Transverse colon (tissue), 4 donors: ENCODE measurements at regions of chr11 and their contacts with region 1.

Region 1: DNA sequence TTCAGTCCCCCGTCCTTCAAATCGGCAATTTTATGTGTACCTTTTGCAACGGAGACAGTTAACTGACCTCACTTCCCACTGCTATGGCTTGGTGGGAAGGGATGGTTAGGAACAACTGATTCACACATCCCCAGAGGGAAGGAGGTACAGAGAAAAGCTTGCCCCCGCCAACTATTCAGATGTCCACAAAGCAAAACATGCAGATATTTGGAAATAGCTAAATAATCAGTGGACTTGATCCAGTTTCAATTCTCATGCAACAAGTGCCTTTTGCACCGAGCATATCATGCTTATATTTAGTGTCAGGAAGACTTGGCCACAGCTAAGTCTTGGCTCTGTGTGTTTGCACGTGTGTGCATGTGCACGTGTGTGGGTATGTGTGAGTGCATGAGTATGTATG is 144.6 kb downstream of the SNX19 start:
- DNase-seq: no peak
- H3K4me3 ChIP-seq: no peak overlapping the region
- H3K27ac ChIP-seq: peak overlapping the region in 1 of 4 donors; percentile 8
- H3K4me1 ChIP-seq: peaks cover 0 to 19% (median 2%) of the 10 kb centered on the region in 4 donors
- H3K27me3 ChIP-seq: no peaks in the 10 kb centered on the region
- CTCF ChIP-seq: no peak
- EP300 ChIP-seq: no peak
- POLR2A ChIP-seq: no peak

Region 2: GRCh38 chr11:130340671-130341319 is 430.9 kb before region 1 on chr11:
- in situ Hi-C with region 1: no loop called
- intact Hi-C with region 1: no loop called
- DNase-seq: no peak
- H3K4me3 ChIP-seq: no peak overlapping the region
- H3K27ac ChIP-seq: no peak overlapping the region
- H3K4me1 ChIP-seq: no peaks in the 10 kb centered on the region
- H3K27me3 ChIP-seq: no peaks in the 10 kb centered on the region
- CTCF ChIP-seq: no peak
- EP300 ChIP-seq: no peak
- POLR2A ChIP-seq: no peak

Region 3: DNA sequence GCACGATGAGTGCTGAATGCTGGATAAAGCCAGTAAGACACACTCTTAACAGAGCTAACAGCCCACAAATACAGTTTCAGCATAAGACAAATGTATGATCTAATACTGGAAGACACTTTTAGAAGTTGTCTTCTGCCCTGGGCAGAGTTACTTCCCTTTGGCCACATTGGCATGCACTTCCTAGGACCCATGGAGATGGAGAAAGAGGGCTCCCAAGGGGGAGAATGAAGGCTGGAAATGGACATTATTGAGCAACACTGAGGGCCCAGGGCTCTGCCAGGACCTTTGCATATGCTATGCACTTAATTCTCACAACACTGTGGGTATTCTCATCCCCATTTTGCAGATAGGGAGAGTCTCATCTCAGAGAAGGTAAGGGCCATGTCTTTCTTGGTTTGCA is 200.2 kb before region 1 on chr11:
- in situ Hi-C with region 1: no loop called
- intact Hi-C with region 1: no loop called
- DNase-seq: no peak
- H3K4me3 ChIP-seq: no peak overlapping the region
- H3K27ac ChIP-seq: no peak overlapping the region
- H3K4me1 ChIP-seq: no peaks in the 10 kb centered on the region
- H3K27me3 ChIP-seq: no peaks in the 10 kb centered on the region
- CTCF ChIP-seq: no peak
- EP300 ChIP-seq: no peak
- POLR2A ChIP-seq: no peak

Region 4: DNA sequence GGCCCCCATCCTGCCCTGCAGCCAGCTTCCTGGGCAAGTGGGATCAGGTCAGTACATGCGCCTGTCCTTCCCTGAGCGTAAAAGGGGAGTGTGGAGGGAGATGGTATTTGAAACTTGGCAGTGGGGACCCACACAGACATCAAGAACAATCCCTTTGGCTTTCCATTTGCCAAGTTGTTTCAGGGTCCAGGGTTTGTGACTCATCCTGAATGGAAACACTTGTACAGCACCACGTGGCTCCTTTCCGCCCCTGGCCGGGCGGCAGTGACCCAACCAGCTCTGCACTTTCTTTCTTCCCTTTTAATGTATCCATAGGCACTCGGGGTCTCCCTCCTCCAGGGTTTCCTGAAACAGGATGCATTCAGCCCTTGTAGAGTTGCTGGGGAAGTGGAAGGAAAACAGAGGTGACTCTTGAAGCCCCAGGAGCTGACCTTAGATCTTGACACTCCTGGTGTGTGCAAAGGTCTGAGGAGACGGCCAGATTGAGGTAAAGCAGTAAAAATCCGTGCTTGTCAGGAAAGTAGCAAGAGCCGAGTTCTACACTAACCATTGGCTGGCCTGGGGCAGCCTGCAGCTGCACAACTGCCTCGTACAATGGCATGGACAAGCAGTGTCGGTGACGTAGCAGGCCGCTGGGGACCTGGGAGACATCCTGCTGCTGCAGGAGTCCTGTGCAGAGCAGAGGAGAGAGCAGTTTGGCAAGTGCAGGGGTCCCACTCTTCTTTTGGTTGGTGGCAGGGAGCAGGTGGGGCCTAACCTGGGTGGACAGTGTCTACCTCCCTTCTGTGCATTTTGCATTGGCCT is 45.3 kb before region 1 on chr11:
- in situ Hi-C with region 1: no loop called
- intact Hi-C with region 1: no loop called
- DNase-seq: peak; percentile 13
- H3K4me3 ChIP-seq: no peak overlapping the region
- H3K27ac ChIP-seq: peak overlapping the region in 1 of 4 donors; percentile 7
- H3K4me1 ChIP-seq: peaks cover 0 to 10% (median 4%) of the 10 kb centered on the region in 4 donors
- H3K27me3 ChIP-seq: no peaks in the 10 kb centered on the region
- CTCF ChIP-seq: no peak
- EP300 ChIP-seq: no peak
- POLR2A ChIP-seq: no peak

Region 5: GRCh38 chr11:130798280-130798679 is 26.6 kb after region 1 on chr11:
- in situ Hi-C with region 1: no loop called
- intact Hi-C with region 1: loop called (anchors 2 kb)
- DNase-seq: no peak
- H3K4me3 ChIP-seq: no peak overlapping the region
- H3K27ac ChIP-seq: no peak overlapping the region
- H3K4me1 ChIP-seq: no peaks in the 10 kb centered on the region
- H3K27me3 ChIP-seq: no peaks in the 10 kb centered on the region
- CTCF ChIP-seq: no peak
- EP300 ChIP-seq: no peak
- POLR2A ChIP-seq: no peak

Region 6: DNA sequence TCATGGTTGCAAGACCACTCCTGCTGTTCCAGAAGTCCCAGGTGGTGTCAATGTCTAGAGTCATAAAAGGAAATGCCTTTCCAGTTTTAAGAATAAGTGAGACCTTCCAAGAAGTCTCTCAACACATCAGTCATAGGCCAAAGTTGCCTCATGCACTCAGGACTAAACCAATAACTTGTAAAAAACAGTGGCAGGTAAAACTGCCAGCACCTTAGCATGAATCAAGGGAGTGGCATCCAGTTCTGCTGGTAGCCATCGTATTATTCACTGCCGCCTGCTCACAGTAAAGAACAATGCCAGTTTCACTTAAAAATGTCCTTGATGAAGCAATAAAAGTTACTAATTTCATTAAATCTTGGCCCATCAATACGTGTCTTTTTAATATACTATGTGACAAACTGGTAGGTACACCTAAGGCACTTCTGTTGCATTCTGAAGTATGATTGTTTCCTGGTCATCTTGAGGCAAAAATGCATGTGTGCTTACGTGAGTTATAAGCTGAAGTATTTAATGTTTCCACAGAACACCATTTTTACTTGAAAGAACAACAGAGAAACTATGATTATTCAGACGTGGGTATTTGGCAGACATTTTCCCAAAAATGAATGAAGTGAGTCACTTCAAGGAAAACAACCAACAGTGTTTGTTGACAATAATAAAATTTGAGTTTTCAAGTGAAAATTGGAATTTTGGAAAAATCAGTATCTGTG is 269.8 kb after region 1 on chr11:
- in situ Hi-C with region 1: no loop called
- intact Hi-C with region 1: no loop called
- DNase-seq: no peak
- H3K4me3 ChIP-seq: no peak overlapping the region
- H3K27ac ChIP-seq: no peak overlapping the region
- H3K4me1 ChIP-seq: no peaks in the 10 kb centered on the region
- H3K27me3 ChIP-seq: no peaks in the 10 kb centered on the region
- CTCF ChIP-seq: no peak
- EP300 ChIP-seq: no peak
- POLR2A ChIP-seq: no peak